Astrocyte of the cerebellum (primary cell): ENCODE measurements at regions of chr7 and their contacts with region 1.

Region 1: GRCh38 chr7:159042581-159043101 is 102.0 kb downstream of the VIPR2 start:
- DNase-seq: no peak
- H3K4me3 ChIP-seq: no peak overlapping the region
- CTCF ChIP-seq: no peak

Region 2: GRCh38 chr7:159007364-159007995 is 35.2 kb before region 1 on chr7:
- in situ Hi-C with region 1: loop called (anchors 5 kb)
- DNase-seq: no peak
- H3K4me3 ChIP-seq: no peak overlapping the region
- CTCF ChIP-seq: no peak

Region 3: DNA sequence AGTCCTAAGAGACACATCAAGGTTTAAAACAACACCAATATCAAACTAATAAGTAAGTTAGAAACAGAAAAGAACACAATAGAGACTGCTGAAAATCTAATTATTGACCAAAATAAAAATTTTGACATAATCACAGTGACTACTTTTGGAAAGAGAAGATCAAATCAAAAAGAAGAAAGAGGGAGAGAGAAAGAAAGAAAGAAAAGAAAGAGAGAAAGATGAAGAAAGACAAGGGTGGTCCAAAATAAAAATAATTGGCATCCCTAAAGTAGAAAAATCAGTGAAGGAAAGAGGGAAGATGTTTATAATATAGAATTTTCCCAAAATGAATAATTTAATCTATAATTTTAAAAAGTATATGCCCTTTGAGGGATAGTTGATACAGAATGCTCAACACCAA is 220.8 kb after region 1 on chr7:
- in situ Hi-C with region 1: no loop called
- DNase-seq: no peak
- H3K4me3 ChIP-seq: no peak overlapping the region
- CTCF ChIP-seq: no peak